ENCODE measurements at regions of chr18 and their contacts with region 1.

Region 1: GRCh38 chr18:32271672-32272208 is 81.9 kb downstream of the MEP1B start:
- DNase-seq: peak in 1 of 5 donors; percentile 30
- ATAC-seq: peak in 3 of 4 donors; percentile 55 to 77 (median 71)
- H3K4me3 ChIP-seq: no peak overlapping the region
- H3K27ac ChIP-seq: no peak overlapping the region
- H3K4me1 ChIP-seq: peaks cover 0 to 8% (median 0%) of the 10 kb centered on the region in 12 donors
- H3K27me3 ChIP-seq: no peaks in the 10 kb centered on the region
- CTCF ChIP-seq: peak; percentile 48 to 79 (median 69)
- POLR2A ChIP-seq: no peak

Region 2: DNA sequence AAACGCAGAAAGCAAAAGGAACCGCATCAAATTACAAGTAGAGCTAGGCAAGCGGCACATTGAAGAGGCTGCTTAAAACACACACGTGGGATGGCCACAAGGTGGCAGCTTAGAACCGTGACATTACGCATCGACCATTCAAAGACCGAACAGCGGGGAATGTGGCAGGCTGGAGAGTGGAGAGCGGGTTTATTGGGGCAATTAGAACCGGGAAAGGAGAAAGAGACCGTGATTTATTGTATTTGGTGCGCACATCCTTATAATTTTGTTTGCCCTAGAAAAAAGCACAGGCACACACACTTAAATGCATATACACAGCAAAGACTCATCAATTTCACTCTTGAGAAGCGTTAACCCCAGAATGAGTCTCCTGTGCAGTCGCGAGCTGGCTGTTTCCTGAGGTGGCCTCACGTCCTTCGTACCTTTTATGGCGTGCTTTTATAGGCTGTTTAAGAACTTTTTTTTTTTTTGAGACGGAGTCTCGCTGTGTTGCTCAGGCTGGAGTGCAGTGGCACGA is 113.6 kb before region 1 on chr18:
- intact Hi-C with region 1: loop called in 6 of 10 experiments (anchors 5 to 10 kb)
- DNase-seq: peak; percentile 69 to 80 (median 73)
- ATAC-seq: peak; percentile 80 to 99 (median 97)
- H3K4me3 ChIP-seq: peak overlapping the region in 7 of 12 donors; percentile 6 to 39 (median 22)
- H3K27ac ChIP-seq: no peak overlapping the region
- H3K4me1 ChIP-seq: peaks cover 0 to 8% (median 3%) of the 10 kb centered on the region in 12 donors
- H3K27me3 ChIP-seq: peaks cover 0 to 5% (median 0%) of the 10 kb centered on the region in 9 donors
- CTCF ChIP-seq: peak; percentile 74 to 88 (median 82)
- POLR2A ChIP-seq: no peak

Region 3: GRCh38 chr18:32167975-32168730 is 103.6 kb before region 1 on chr18:
- intact Hi-C with region 1: loop called in 5 of 10 experiments (anchors 5 to 10 kb)
- DNase-seq: no peak
- ATAC-seq: no peak
- H3K4me3 ChIP-seq: no peak overlapping the region
- H3K27ac ChIP-seq: no peak overlapping the region
- H3K4me1 ChIP-seq: no peaks in the 10 kb centered on the region
- H3K27me3 ChIP-seq: no peaks in the 10 kb centered on the region
- CTCF ChIP-seq: no peak
- POLR2A ChIP-seq: no peak

Region 4: DNA sequence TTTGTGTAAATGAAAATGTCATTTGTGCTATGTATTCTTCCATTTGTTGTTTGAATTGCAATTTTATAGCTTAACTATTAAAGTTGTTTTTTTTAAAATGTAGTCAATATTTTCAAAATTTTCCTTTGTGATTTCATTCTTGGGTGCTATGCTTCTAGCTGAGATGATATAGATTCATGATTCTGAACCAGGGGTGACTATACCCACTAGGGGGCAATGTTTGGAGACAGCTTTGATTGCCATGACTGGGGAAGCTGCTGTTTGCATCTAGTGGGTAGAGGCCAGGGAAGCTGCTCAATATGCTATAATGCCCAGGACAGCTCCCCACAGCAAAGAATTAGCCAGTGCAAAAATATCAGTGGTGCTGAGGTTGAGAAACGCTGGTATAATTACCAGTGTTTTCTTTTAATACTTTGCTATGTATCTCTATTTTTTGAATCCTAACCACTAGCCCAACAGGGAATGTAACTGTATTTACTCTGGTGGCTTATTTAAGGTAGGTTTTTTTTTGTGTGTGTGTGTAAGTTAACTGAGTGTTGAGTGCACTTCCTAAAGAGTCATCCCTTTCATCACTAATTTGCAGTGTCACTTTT is 17.8 kb after region 1 on chr18:
- intact Hi-C with region 1: no loop called
- DNase-seq: peak in 2 of 5 donors; percentile 33 to 38
- ATAC-seq: peak; percentile 61 to 82 (median 70)
- H3K4me3 ChIP-seq: no peak overlapping the region
- H3K27ac ChIP-seq: no peak overlapping the region
- H3K4me1 ChIP-seq: peaks cover 0 to 3% (median 0%) of the 10 kb centered on the region in 12 donors
- H3K27me3 ChIP-seq: no peaks in the 10 kb centered on the region
- CTCF ChIP-seq: peak; percentile 56 to 73 (median 64)
- POLR2A ChIP-seq: no peak

Region 5: DNA sequence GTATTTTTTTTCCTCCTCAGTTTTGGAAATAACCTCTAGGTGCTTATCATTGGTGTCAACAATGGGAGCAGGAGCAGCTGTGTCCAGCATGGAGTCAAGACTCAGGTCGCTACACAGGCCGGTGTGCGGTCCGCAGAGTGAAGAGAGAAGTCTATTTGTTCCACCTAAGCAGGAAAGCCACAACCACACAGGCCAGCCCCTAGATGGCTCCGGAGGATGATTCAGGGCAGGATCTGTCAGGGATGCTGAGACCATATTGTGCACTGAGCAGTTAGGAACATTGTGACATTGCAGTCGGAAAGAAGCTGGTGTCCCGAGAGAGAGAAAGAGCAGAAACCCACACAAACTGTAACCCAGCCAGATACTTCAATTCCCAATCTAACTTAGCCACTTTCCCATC is 62.0 kb after region 1 on chr18:
- intact Hi-C with region 1: loop called in 1 of 10 experiments (anchors 5 kb)
- DNase-seq: peak in 2 of 5 donors; percentile 15 to 35
- ATAC-seq: peak in 3 of 4 donors; percentile 70 to 76 (median 72)
- H3K4me3 ChIP-seq: no peak overlapping the region
- H3K27ac ChIP-seq: no peak overlapping the region
- H3K4me1 ChIP-seq: peaks cover 0 to 32% (median 5%) of the 10 kb centered on the region in 12 donors
- H3K27me3 ChIP-seq: no peaks in the 10 kb centered on the region
- CTCF ChIP-seq: peak in 5 of 12 donors; percentile 7 to 37 (median 22)
- POLR2A ChIP-seq: no peak

Region 6: GRCh38 chr18:32366586-32367538 is 95.1 kb after region 1 on chr18:
- intact Hi-C with region 1: loop called in 1 of 10 experiments (anchors 10 kb)
- DNase-seq: no peak
- ATAC-seq: no peak
- H3K4me3 ChIP-seq: no peak overlapping the region
- H3K27ac ChIP-seq: no peak overlapping the region
- H3K4me1 ChIP-seq: peaks cover 0 to 17% (median 3%) of the 10 kb centered on the region in 12 donors
- H3K27me3 ChIP-seq: no peaks in the 10 kb centered on the region
- CTCF ChIP-seq: no peak
- POLR2A ChIP-seq: no peak

Region 7: GRCh38 chr18:32389858-32390257 is 118.1 kb after region 1 on chr18:
- intact Hi-C with region 1: no loop called
- DNase-seq: peak; percentile 57 to 81 (median 74)
- ATAC-seq: peak; percentile 76 to 87 (median 84)
- H3K4me3 ChIP-seq: no peak overlapping the region
- H3K27ac ChIP-seq: no peak overlapping the region
- H3K4me1 ChIP-seq: peaks cover 0 to 29% (median 9%) of the 10 kb centered on the region in 12 donors
- H3K27me3 ChIP-seq: no peaks in the 10 kb centered on the region
- CTCF ChIP-seq: no peak
- POLR2A ChIP-seq: no peak

Region 8: DNA sequence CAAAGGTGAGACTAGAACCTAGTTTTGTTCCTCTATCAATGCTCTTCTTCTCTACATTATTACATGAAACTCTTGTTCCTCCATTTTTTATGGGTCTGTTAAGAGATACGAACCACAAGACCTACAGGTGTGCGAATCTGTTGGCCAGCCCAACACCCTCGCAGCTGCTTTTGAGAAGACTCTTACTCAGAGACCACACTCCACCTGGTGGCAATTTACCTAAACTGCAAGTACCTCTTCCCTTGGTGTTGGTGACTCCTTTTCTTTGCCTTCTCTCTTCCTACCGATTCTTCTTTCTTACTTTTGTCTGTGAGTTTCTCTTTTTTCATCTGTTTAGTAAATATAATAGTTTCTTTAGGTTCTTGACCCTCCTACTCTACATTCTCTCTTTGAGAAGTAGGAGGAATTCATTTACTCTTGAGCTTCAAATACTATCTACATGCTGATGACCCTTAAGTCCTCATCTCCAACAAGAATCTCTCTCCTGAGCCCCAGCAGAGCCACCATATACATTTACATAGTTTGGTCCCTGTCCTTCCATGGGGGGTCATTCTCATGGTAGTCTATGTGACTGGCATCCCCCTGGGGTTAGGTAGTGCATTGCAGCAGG is 280.8 kb after region 1 on chr18:
- intact Hi-C with region 1: loop called (anchors 2 to 5 kb)
- DNase-seq: peak in 4 of 5 donors; percentile 36 to 45 (median 40)
- ATAC-seq: peak in 2 of 4 donors; percentile 70
- H3K4me3 ChIP-seq: no peak overlapping the region
- H3K27ac ChIP-seq: no peak overlapping the region
- H3K4me1 ChIP-seq: no peaks in the 10 kb centered on the region
- H3K27me3 ChIP-seq: peaks cover 0 to 5% (median 0%) of the 10 kb centered on the region in 9 donors
- CTCF ChIP-seq: peak; percentile 63 to 80 (median 73)
- POLR2A ChIP-seq: no peak